ENCODE measurements at regions of chr16 and their contacts with region 1.

Region 1: DNA sequence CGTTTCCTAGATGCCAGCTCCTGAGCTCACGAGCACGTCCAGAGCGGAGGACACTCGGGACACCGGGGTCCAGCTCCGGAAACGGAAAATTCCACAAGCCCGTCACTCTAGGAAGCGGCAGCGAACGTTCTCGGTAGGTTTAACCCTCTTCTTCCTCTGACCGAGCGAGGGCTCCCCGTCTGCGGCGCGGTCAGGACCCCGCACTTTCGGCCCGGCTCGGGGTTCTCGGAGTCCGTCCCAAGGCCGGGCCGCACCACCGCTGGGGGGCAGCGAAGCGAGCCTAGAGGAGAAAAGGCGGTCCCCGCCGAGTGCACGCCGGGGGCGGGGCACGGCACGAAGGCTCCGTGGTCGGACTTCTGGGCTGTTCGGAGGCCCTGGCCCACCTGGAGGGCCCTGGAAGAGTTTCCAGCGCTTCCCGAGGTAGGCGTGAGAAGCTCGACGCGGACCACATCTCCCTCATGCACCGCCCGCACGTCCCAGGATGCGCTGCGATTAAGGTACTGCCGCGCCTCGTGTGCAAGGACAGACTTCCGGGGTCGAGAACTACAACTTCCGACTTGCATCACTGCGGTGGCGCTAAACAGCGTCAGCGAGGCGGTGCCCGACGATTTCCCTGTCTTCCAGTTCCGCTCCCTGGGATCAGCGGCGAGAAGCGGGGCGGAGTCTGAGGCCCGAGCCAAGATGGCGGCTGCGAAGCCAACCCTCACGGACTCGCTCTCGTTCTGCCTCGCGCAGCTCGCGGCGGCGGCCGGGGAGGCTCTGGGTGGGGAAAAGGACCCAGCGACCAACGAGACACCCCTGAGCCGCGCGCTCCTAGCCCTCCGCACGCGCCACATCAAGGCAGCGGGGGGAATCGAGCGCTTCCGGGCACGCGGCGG is at the start of gene ARMC5:
- DNase-seq: peak; percentile 96
- H3K4me3 Mint-ChIP-seq: peak within 1 kb of the TSS; percentile 89
- H3K27ac Mint-ChIP-seq: peak within 1 kb of the TSS; percentile 96
- H3K4me1 Mint-ChIP-seq: peaks cover 31% of the 10 kb centered on the region
- H3K27me3 Mint-ChIP-seq: no peaks in the 10 kb centered on the region
- total RNA-seq, gene ARMC5: 10.5 and 10.6 TPM in 2 replicates

Region 2: GRCh38 chr16:30957456-30958174 is 501.5 kb before region 1 on chr16 and contains the start of gene SETD1A:
- intact Hi-C with region 1: loop called (anchors 1 kb)
- DNase-seq: peak; percentile 94
- H3K4me3 Mint-ChIP-seq: peak within 1 kb of the TSS; percentile 95
- H3K27ac Mint-ChIP-seq: peak within 1 kb of the TSS; percentile 99
- H3K4me1 Mint-ChIP-seq: peaks cover 26% of the 10 kb centered on the region
- H3K27me3 Mint-ChIP-seq: no peaks in the 10 kb centered on the region
- total RNA-seq, gene SETD1A: 28.9 TPM in 2 replicates

Region 3: DNA sequence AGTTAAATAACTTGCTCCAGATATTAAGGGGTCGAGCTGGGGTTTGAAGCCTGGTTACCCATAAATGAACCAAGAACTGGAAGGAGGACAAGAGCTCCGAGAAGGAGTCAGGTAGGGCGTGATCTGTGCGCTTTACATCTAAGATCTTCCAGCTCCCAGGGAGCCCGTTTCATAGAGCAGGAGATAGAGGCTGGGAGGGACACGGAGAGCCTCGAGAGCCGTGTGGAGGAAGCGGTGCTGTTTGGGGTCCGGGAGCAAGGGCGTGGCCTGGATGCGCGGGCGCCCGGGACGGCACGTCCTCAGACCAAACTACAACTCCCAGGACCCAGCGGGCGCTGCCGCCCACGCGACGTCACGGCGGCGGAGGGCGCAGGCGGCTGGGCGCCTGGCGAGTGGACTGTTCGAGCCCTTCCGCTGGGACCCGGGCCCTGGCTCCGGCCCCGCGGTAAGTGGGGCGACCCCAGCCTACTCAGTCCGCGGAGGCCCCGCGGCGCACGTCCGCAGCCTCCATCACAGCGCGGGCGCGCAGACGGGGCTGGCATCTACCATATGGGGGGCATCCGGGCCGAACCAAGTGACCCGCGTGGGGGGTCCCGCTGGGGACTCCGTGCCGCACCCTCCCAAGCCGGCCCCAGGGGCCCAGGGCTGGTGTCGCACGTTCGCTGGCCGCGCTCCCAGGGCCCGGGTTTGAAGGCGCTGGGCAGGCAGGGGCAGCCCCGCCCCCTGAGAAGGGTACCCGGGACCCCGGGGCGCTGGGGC is 350.9 kb before region 1 on chr16 and contains the start of gene BCKDK:
- intact Hi-C with region 1: loop called (anchors 5 kb)
- DNase-seq: peak; percentile 65
- H3K4me3 Mint-ChIP-seq: peak within 1 kb of the TSS; percentile 85
- H3K27ac Mint-ChIP-seq: peak within 1 kb of the TSS; percentile 91
- H3K4me1 Mint-ChIP-seq: peaks cover 18% of the 10 kb centered on the region
- H3K27me3 Mint-ChIP-seq: no peaks in the 10 kb centered on the region
- total RNA-seq, gene BCKDK: 47.5 and 50.0 TPM in 2 replicates

Region 4: GRCh38 chr16:31179747-31180459 is 279.2 kb before region 1 on chr16 and contains the start of gene FUS:
- intact Hi-C with region 1: loop called (anchors 10 kb)
- DNase-seq: peak; percentile 88
- H3K4me3 Mint-ChIP-seq: peak within 1 kb of the TSS; percentile 98
- H3K27ac Mint-ChIP-seq: peak within 1 kb of the TSS; percentile 95
- H3K4me1 Mint-ChIP-seq: peaks cover 38% of the 10 kb centered on the region
- H3K27me3 Mint-ChIP-seq: no peaks in the 10 kb centered on the region
- total RNA-seq, gene FUS: 874 and 904 TPM in 2 replicates

Region 5: DNA sequence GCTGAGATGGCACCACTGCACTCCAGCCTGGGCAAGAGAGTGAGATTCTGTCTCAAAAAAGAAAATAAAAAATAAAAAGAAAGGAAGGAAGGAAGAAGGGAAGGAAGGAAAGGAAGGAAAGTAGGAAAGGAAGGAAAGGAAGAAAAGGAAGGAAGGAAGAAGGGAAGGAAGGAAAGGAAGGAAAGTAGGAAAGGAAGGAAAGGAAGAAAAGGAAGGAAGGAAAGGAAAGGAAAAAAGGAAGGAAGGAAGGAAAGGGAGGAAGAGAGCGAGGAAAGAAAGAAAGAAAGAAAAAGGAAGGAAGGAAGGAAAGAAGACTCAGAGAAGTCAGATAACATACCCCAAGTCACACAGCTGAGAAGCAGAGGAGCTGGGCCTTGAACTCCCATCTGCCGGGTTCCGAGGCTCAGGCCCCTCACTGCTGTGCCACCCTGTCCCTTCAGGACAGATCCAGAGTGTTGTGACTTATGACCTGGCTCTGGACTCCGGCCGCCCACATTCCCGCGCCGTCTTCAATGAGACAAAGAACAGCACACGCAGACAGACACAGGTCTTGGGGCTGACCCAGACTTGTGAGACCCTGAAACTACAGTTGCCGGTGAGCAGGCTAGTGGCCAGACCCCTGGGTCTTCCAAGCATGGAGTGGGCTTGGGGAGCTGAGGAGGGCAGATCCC is 135.0 kb before region 1 on chr16:
- intact Hi-C with region 1: no loop called
- DNase-seq: no peak
- H3K4me3 Mint-ChIP-seq: no peak overlapping the region
- H3K27ac Mint-ChIP-seq: no peak overlapping the region
- H3K4me1 Mint-ChIP-seq: peaks cover 12% of the 10 kb centered on the region
- H3K27me3 Mint-ChIP-seq: no peaks in the 10 kb centered on the region

Region 6: DNA sequence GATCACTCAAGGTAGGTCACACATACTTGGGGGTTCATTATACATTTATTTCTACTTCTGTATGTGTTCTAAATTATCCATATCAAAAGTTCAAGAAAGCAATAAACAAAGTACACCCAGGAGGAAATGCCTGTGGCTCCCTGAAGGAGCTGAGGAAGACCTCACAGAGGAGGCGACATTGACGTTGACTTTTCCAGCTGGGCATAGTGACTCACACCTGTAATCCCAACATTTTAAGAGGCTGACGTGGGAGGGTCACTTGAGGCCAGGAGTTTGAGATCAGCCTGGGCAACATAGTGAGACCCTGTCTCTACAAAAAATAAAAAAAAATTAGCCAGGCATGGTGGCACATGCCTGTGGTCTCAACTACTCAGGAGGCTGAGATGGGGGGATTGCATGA is 49.6 kb before region 1 on chr16:
- intact Hi-C with region 1: no loop called
- DNase-seq: no peak
- H3K4me3 Mint-ChIP-seq: no peak overlapping the region
- H3K27ac Mint-ChIP-seq: no peak overlapping the region
- H3K4me1 Mint-ChIP-seq: peaks cover 10% of the 10 kb centered on the region
- H3K27me3 Mint-ChIP-seq: no peaks in the 10 kb centered on the region

Region 7: GRCh38 chr16:31507929-31508705 is 49.0 kb after region 1 on chr16 and contains the start of gene RUSF1:
- intact Hi-C with region 1: loop called (anchors 1 kb)
- DNase-seq: peak; percentile 80
- H3K4me3 Mint-ChIP-seq: peak within 1 kb of the TSS; percentile 94
- H3K27ac Mint-ChIP-seq: peak within 1 kb of the TSS; percentile 91
- H3K4me1 Mint-ChIP-seq: peaks cover 30% of the 10 kb centered on the region
- H3K27me3 Mint-ChIP-seq: no peaks in the 10 kb centered on the region
- total RNA-seq, gene RUSF1: 41.2 and 43.8 TPM in 2 replicates

Region 8: DNA sequence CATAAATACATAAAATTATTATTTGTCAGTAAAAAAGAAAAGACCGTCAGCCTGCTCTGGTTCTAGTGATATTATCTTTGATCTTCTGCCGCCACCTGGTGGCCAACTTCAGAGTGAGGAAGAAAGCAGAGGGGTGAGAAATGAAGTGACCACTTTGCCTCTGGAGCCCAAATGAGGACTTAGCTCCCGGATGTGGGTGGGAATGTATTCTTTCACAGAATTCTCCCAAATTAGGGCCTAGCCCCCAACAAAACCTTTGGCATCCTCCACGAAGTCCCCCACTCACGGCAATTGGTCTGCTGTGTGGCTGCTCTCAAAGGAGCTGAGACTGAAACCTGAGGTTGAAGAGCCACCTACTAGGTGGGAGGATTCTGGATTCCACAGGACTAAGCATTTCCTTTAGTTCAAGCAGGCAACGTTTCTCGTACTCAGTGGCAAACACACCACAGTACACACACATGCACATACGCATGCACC is 409.6 kb after region 1 on chr16:
- intact Hi-C with region 1: loop called (anchors 2 kb)
- DNase-seq: peak; percentile 73
- H3K4me3 Mint-ChIP-seq: peak overlapping the region; percentile 56
- H3K27ac Mint-ChIP-seq: peak overlapping the region; percentile 96
- H3K4me1 Mint-ChIP-seq: peaks cover 48% of the 10 kb centered on the region
- H3K27me3 Mint-ChIP-seq: peaks cover 5% of the 10 kb centered on the region

Measured in activated T-helper 2 cell treated with anti-CD3 and anti-CD28 coated beads, Interferon-gamma antibody, Interleukin-2, Interleukin-4, amounts not matched to agents 10 μg/mL and 5 μg/mL and 100 μg/mL, durations not matched to agents 14 hours and 24 hours and 36 hours (primary cell).